Ascending aorta (tissue), 2 donors: ENCODE measurements at regions of chrX and their contacts with region 1.

Region 1: DNA sequence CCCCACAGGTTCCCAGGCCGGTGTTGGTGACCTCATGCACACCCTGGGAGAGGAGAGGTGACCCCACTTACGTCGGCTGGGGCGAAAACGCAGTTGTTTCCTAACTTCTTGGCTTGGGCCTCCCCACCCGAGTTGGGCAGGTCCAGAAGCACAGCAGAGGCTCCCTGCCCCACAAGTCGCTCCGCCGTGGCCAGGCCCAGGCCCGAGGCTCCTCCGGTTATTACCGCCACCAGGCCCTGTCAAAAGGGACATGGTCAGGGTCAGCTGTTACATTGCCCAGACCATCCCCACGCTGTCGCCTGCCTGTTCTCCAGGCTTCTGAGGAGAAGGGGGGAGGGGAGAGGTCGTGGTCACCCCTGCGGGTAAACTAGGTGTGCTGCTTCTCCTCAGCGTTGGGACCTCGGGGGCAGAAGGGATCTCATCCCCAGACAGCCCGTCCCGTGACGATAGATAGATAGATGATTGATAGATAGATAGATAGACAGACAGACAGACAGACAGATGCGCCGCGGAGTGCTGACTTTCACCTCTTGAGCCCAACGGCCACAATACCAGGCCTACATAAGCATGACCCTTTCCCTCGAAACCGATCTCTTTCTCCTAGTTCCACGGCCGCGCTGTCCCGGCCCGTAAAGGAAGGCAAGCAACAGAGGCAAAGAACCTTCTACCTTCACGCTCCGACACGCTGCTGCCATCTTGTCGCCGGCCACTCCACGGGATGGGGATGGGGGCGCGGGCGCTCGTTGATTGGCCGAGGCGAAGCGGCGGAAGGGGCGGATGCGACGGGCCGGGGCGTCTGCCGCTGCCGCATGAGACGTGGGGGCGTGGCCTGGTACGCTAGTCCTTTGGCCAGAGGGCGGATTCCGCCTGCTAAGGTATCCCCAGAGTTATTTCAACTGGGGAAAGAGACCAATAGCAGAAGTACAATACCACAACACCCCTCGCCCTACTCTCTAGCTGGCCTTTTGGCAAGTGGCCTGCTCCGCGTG is at the start of gene HSD17B10:
- DNase-seq: peak; percentile 49 to 92
- H3K4me3 ChIP-seq: peak within 1 kb of the TSS; percentile 47 to 72
- H3K27ac ChIP-seq: peak within 1 kb of the TSS; percentile 69 to 83
- H3K4me1 ChIP-seq: no peaks in the 10 kb centered on the region
- H3K27me3 ChIP-seq: no peaks in the 10 kb centered on the region
- CTCF ChIP-seq: no peak
- total RNA-seq, gene HSD17B10: 21.5 TPM

Region 2: DNA sequence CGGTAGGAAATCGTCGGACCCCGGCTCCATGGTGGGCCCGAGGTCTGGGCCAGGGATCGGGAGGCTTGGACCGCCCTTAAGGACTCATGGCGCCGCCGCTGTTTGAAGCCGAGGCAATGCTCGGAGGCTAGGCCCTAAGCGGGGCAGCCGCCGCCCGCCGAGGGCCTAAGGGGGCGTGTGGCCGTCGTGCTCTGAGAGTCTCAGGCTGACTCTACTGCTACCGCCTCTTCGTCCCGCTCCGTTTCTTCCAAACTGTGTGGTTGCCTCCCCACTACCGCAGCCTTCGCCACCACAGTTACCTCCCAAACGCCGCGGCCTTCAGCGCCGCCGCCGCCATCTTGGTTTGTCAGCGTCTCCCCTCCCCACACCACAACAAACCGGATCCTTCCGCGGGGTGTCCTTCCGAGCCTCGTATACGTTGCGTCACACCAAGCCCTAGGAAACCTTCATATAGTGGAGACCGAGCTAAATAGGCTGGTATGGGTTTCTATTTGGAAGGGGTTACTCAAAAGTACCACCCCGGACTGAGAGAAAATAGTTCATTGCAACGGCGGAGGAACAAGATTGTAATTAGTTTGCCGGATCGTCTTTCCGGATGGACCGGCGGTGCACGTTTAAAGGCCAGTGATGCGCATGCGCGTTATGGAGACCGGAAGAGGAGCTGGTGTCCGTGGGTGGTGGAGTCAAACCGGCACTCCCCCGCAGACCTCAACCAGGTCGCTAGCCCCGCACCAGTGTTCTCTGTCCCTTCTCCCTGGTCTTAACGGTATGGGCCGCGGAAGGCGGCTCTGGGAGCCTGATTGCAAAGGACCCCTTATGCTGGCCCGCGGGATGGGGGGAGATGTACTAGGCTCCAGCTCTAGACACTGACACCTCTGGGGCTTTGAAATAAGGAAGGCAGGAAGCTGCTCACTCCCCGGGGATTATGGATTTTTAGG is 208.8 kb before region 1 on chrX and contains the start of gene KDM5C:
- intact Hi-C with region 1: loop called (anchors 5 kb)
- DNase-seq: peak; percentile 64 to 96
- H3K4me3 ChIP-seq: peak within 1 kb of the TSS; percentile 84 to 89
- H3K27ac ChIP-seq: peak within 1 kb of the TSS; percentile 84 to 86
- H3K4me1 ChIP-seq: peaks cover 15 to 26% of the 10 kb centered on the region in 2 donors
- H3K27me3 ChIP-seq: no peaks in the 10 kb centered on the region
- CTCF ChIP-seq: no peak
- total RNA-seq, gene KDM5C: 71.7 TPM

Region 3: DNA sequence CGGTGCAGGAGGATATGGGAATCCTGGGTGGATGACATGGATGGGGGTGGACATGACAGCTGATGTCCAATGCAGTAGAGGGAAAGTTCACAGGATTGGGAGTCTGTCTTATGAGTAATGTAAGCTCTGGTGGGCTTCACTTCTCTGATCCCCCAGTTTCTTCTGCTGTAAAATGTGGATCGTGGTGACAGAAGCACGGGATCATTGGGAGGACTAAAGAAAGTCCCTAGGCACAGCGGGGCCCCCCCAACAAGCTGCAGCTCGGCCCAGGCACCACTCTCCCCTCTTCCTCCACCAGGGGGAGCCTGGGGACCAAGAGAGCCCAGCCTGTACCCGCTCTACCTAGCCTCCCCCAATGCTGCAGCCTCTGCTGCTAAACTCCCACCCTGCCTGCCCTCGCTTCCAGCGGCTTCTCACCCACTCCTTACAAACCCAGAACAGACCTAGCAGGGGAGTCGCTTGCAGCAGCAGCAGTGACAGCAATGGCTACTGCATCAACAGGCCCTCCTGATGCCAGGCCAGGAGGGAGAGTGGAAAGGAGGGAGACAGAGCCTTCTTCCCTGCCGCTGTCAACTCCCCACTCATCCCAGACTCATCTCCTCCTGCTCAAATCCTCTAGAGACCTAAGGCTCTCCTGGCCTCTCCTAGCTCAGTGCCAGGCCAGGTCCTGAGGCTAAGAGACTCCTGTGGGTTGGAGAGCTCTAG is 116.4 kb before region 1 on chrX:
- intact Hi-C with region 1: loop called (anchors 2 kb)
- DNase-seq: peak in 1 of 2 donors; percentile 80
- H3K4me3 ChIP-seq: no peak overlapping the region
- H3K27ac ChIP-seq: no peak overlapping the region
- H3K4me1 ChIP-seq: peaks cover 0 to 7% of the 10 kb centered on the region in 2 donors
- H3K27me3 ChIP-seq: peaks cover 7% of the 10 kb centered on the region
- CTCF ChIP-seq: peak; percentile 64 to 87 (median 69)

Region 4: DNA sequence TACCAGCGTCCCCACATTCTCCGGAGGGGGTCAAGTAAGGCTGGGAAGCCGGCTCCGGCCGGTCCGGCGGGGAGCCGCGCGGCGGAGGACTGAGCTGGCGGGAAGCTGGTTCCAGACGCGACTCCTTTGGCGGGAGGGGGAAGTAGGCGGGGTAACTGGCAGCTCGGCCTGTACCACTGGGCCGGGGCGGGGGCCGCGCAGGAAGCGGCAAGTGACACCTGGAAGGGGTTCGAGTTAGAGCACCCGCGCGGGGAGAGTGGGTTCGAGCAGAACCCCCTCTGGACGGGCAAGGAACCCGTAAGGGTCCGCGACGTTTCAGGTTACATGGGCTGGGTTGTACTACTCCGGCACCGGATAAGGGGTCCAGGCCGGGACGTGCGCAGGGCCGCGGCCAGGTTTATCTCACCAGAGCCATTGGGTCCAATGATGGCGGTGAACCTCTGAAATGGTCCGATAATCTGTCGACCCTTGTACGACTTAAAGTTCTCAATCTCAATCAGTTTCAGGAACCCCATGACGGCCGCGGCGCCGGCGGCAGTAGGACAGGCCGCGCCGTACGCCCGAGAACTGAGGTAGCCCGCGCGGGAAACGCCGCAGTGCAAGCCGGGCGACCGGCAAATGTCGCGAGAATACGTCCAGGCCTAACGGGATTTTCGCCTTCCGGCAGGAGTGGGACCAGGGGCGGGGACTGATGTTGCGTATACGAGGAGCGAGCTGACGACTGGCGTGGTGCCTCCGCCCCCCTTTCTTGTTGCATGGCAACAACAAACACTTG is 11.7 kb before region 1 on chrX and contains the start of gene SMC1A:
- intact Hi-C with region 1: loop called (anchors 1 kb)
- DNase-seq: peak; percentile 93 to 99
- H3K4me3 ChIP-seq: peak within 1 kb of the TSS; percentile 73 to 85
- H3K27ac ChIP-seq: peak within 1 kb of the TSS; percentile 91 to 92
- H3K4me1 ChIP-seq: peaks cover 5 to 10% of the 10 kb centered on the region in 2 donors
- H3K27me3 ChIP-seq: no peaks in the 10 kb centered on the region
- CTCF ChIP-seq: no peak
- total RNA-seq, gene SMC1A: 11.2 TPM